HEK293 (cell line): ENCODE measurements at regions of chr15 and their contacts with region 1.

Region 1: DNA sequence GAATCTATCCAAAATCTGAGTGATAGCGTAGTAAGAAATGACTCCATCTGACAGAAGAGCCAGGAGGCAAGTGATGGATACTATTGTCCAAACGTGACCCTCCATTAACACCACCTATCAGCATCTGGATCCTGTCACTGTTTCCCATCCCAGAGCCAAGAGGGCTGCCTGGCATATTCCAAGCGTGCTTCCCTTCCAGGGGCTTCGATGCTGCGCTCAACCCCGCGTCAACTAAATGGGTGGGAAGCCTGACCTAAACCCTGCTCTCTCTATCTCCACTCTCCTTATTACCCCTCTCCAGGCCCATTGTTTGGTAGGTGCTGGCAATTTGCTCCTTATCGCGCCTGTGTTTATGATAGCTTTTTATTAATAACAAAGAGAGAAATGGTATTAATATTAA is 83.2 kb downstream of the NR2F2 start:
- H3K4me3 ChIP-seq: no peak overlapping the region
- H3K27ac ChIP-seq: no peak overlapping the region
- H3K4me1 ChIP-seq: peaks cover 29% of the 10 kb centered on the region
- CTCF ChIP-seq: no peak

Region 2: GRCh38 chr15:96514607-96515285 is 101.1 kb after region 1 on chr15:
- CTCF ChIA-PET with region 1: no interaction called
- POLR2A ChIA-PET with region 1: interaction called, 10 read pairs
- H3K4me3 ChIP-seq: no peak overlapping the region
- H3K27ac ChIP-seq: no peak overlapping the region
- H3K4me1 ChIP-seq: peaks cover 8% of the 10 kb centered on the region
- CTCF ChIP-seq: no peak